ENCODE measurements at regions of chr16 and their contacts with region 1.

Region 1: DNA sequence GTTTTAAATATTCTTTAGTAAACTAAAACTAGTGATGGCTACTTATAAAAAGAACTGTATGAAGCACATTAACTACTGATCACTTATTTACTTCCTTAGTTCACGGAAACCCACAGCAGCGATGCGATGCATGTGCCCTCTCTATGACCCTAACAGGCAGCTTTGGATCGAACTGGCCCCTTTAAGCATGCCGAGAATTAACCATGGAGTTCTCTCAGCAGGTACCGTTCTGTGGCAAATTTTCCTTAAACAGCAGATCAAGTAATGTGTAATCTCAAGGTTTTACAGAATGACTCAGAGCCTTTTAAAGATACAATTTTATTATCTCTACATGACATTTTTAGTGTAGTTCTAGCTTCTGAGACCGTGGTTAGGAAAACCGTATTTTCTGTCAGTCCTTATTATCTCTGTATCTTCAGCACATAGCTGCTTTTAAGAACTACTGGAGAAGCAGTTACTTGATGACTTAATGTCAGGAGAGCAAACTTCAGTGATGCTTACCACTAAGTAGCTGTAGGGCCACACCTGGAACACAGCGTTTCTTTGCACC is 43.0 kb downstream of the GAN start:
- DNase-seq: no peak
- H3K4me3 ChIP-seq: no peak overlapping the region
- H3K27ac ChIP-seq: no peak overlapping the region
- H3K4me1 ChIP-seq: no peaks in the 10 kb centered on the region
- H3K27me3 ChIP-seq: no peaks in the 10 kb centered on the region
- CTCF ChIP-seq: no peak

Region 2: DNA sequence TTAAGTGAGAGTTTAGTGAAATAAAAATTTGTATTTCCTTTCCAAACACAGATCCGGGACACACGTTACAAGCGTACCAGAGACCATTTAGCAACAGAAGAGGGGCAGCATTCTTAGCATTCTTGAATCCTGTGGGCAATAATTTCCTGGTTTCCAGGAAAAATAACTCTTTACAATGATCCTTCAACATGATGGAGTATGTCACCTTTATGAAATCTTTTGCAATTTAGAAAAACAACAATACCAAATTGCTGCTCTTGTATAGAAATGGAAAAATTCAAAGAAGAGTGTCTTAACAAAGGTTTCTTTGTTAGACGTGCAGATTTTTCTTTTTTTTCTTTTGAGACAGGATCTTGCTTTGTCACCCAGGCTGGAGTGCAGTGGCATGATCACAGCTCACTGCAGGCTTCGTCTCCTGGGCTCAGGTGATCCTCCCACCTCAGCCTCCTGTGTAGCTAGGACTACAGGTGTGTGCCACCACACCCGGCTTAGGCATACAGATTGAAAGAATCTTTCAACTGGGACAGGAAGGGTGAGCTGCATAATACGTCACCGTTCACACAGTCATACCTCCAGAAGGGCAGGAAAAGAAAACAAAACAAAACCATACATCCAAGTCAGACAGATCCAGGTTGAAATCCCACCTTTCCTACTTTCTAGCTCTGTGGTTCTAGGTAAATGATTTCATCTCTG is 250.8 kb before region 1 on chr16:
- CTCF ChIA-PET with region 1: no interaction called
- POLR2A ChIA-PET with region 1: no interaction called
- intact Hi-C with region 1: no loop called
- DNase-seq: peak in 1 of 2 experiments; percentile 74
- H3K4me3 ChIP-seq: no peak overlapping the region
- H3K27ac ChIP-seq: peak overlapping the region; percentile 8; the same call in 1 of the 2 replicates
- H3K4me1 ChIP-seq: peaks cover 20% of the 10 kb centered on the region
- H3K27me3 ChIP-seq: no peaks in the 10 kb centered on the region
- CTCF ChIP-seq: no peak

Region 3: DNA sequence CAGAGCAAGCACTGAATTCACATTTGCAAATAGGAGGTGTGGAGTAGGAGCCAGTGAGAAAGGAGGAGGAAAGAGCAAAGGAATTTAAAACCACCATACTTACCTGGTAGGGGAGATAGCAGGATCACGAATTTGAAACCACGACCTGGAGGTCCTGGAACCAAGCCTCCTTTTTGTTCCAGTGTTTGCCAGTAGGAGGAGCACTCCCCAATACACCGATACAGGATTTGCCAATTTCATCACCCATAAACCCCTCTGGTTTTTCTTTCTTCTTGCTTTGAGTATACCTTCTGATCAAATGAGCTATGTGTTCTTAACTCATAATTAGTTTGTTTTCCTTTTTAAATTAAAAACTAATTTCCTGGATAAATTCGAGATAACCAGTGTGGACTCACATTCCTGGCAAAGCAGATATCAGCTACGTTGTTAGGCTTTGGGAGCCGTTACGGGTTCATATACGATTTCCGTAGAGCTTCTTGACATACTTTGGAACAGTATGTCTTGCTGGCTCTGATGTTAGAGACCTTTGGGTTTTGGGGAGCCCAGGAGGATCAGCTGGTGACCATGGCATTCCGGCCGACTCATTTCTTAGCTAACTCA is 96.6 kb before region 1 on chr16:
- CTCF ChIA-PET with region 1: no interaction called
- POLR2A ChIA-PET with region 1: no interaction called
- intact Hi-C with region 1: loop called (anchors 5 kb)
- DNase-seq: no peak
- H3K4me3 ChIP-seq: no peak overlapping the region
- H3K27ac ChIP-seq: no peak overlapping the region
- H3K4me1 ChIP-seq: peaks cover 6% of the 10 kb centered on the region
- H3K27me3 ChIP-seq: no peaks in the 10 kb centered on the region
- CTCF ChIP-seq: peak; percentile 77